HEK293 (cell line): ENCODE measurements at regions of chr1 and their contacts with region 1.

Region 1: GRCh38 chr1:202192770-202193613 is 607 bp upstream of the LGR6 start:
- H3K4me3 ChIP-seq: no peak overlapping the region
- H3K27ac ChIP-seq: no peak overlapping the region
- H3K4me1 ChIP-seq: no peaks in the 10 kb centered on the region
- CTCF ChIP-seq: peak; percentile 56

Region 2: GRCh38 chr1:202085682-202086404 is 107.1 kb before region 1 on chr1:
- CTCF ChIA-PET with region 1: no interaction called
- POLR2A ChIA-PET with region 1: no interaction called
- H3K4me3 ChIP-seq: no peak overlapping the region
- H3K27ac ChIP-seq: no peak overlapping the region
- H3K4me1 ChIP-seq: no peaks in the 10 kb centered on the region; the same call in 1 of the 2 replicates
- CTCF ChIP-seq: no peak

Region 3: DNA sequence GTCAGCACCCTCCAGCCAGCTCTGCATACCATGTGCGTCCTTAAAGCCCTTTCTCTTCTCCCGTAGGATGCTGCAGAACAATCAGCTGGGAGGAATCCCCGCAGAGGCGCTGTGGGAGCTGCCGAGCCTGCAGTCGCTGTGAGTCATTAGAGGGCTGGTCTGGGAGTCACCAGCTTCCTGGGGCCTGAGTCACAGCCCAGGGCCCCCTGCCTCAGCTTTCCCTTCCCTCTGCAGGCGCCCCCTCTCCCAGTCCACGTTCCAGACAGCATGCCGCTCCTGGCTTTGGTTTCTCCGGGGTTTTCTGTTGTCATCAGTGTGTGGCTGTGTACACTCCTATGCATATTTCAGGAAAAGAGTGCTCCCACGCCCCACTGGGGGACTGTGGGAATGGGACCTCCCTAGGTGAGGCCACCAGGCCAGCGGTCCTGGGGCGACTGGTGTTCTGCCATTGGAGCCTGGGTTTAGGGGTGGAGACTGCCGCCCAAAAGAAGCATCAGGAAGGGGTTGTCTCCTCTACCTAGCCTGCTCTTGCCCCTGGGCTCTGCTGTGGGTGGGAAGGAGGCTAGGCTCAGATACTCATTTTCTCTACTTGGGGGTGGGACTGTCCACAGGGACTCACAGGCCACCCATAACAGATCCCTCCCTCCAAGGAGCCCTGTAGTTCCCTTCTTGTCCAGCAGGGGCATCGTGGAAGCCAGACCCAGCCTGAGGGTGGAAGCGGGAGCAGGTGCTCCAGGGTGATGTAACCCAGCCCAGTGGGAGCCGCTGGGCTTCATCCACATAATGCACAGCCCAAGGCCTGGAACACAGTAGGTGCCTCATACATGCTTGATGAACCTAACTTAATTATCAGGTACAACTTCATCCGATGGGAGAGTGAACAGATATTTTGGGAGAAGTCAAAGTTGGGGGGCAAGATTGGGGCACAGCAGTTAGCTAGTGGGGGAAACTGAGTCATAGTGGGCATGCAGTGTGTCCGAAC is 43.2 kb after region 1 on chr1:
- CTCF ChIA-PET with region 1: interaction called, 35 read pairs
- POLR2A ChIA-PET with region 1: no interaction called
- H3K4me3 ChIP-seq: peak overlapping the region; percentile 1; the same call in 1 of the 2 replicates
- H3K27ac ChIP-seq: no peak overlapping the region; the same call in 1 of the 2 replicates
- H3K4me1 ChIP-seq: peaks cover 5% of the 10 kb centered on the region; the same call in 1 of the 2 replicates
- CTCF ChIP-seq: peak; percentile 74

Region 4: DNA sequence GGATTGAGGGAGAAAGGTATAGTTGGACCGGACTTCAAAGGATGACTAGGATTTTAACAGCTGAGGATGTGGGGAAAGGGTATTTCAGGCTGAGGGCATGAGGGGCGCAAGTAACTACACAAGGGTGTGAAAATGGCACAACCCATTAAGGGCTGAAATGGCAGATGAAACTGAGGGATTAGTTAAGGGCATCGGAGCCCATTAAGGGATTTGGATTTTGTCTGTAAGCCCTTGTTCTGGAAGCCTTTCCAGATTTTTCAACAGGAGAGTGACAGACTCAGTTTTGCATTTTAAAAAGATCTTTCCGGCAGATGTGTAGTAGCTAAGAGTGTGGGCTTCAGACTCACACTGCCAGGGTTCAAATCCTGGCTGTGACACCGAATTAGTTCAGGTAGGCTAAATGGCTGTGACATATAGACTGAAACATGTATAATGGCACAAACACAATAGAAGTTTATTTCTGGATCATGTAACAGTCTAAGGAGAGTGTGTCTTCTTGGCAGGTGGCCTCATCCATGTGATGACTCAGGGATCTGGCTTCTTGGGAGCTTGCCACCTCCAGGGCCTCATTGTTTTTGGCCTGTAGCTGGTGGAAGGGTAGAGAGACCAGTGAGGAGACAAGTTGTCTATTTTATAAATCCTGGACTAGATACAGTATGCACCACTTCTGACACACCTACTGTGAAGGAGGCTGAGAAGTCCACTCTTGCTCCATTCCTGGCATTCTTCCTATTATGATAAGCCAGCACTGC is 99.1 kb after region 1 on chr1:
- CTCF ChIA-PET with region 1: interaction called, 15 read pairs
- POLR2A ChIA-PET with region 1: no interaction called
- H3K4me3 ChIP-seq: no peak overlapping the region
- H3K27ac ChIP-seq: no peak overlapping the region
- H3K4me1 ChIP-seq: no peaks in the 10 kb centered on the region
- CTCF ChIP-seq: no peak

Region 5: GRCh38 chr1:202329891-202330290 is 136.9 kb after region 1 on chr1:
- CTCF ChIA-PET with region 1: interaction called, 11 read pairs
- POLR2A ChIA-PET with region 1: interaction called, 4 read pairs
- H3K4me3 ChIP-seq: no peak overlapping the region
- H3K27ac ChIP-seq: no peak overlapping the region
- H3K4me1 ChIP-seq: no peaks in the 10 kb centered on the region
- CTCF ChIP-seq: no peak

Region 6: GRCh38 chr1:202713110-202713509 is 520.1 kb after region 1 on chr1:
- CTCF ChIA-PET with region 1: interaction called, 29 read pairs
- POLR2A ChIA-PET with region 1: no interaction called
- H3K4me3 ChIP-seq: no peak overlapping the region
- H3K27ac ChIP-seq: no peak overlapping the region
- H3K4me1 ChIP-seq: no peaks in the 10 kb centered on the region; the same call in 1 of the 2 replicates
- CTCF ChIP-seq: no peak